ENCODE measurements at regions of chr17 and their contacts with region 1.

Region 1: GRCh38 chr17:71472809-71473789 is 647.7 kb upstream of the SOX9 start:
- ATAC-seq: peak in 7 of 8 experiments; percentile 42 to 73 (median 67)
- H3K4me3 ChIP-seq: no peak overlapping the region
- H3K27ac ChIP-seq: no peak overlapping the region
- H3K4me1 ChIP-seq: no peaks in the 10 kb centered on the region

Region 2: GRCh38 chr17:70636517-70637133 is 836.5 kb before region 1 on chr17:
- in situ Hi-C with region 1: loop called in 2 of 9 experiments (anchors 25 kb)
- ATAC-seq: peak in 1 of 8 experiments; percentile 38
- H3K4me3 ChIP-seq: no peak overlapping the region
- H3K27ac ChIP-seq: no peak overlapping the region
- H3K4me1 ChIP-seq: peaks cover 0 to 3% of the 10 kb centered on the region in 2 donors

Region 3: GRCh38 chr17:71142333-71142732 is 330.8 kb before region 1 on chr17:
- in situ Hi-C with region 1: loop called in 1 of 9 experiments (anchors 25 kb)
- ATAC-seq: no peak
- H3K4me3 ChIP-seq: no peak overlapping the region
- H3K27ac ChIP-seq: no peak overlapping the region
- H3K4me1 ChIP-seq: peaks cover 11 to 13% of the 10 kb centered on the region in 2 donors

Region 4: DNA sequence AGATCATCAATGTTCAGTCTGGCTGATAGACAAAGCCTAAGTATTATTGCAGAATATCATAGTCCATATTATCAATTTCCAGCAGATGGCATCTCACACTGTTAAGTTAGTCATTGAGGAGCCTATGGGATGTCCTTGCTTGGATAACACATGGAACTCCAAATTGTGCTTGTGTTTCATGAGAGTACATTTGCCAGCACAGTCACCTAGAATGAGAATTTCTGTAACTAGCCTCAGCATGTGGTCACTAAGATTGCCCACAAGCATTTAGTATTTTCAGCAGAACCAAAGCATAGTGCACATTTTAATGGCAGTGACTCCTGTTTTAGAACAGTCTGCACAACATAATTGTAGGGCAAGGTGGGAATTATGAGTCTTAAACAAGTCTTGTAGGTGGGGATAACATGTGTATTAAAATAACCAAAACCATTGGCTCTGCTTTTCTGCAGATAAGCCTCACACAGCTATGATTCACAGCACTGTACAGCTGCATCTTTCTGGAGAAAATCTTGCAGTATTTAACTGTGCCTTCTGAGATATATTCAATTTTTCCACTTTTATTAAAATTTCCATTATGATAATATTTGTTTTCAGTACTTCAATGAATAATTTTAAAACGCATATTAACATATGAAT is 235.1 kb before region 1 on chr17:
- in situ Hi-C with region 1: loop called in 1 of 9 experiments (anchors 25 kb)
- ATAC-seq: peak in 6 of 8 experiments; percentile 46 to 85 (median 58)
- H3K4me3 ChIP-seq: no peak overlapping the region
- H3K27ac ChIP-seq: no peak overlapping the region
- H3K4me1 ChIP-seq: no peaks in the 10 kb centered on the region

Region 5: DNA sequence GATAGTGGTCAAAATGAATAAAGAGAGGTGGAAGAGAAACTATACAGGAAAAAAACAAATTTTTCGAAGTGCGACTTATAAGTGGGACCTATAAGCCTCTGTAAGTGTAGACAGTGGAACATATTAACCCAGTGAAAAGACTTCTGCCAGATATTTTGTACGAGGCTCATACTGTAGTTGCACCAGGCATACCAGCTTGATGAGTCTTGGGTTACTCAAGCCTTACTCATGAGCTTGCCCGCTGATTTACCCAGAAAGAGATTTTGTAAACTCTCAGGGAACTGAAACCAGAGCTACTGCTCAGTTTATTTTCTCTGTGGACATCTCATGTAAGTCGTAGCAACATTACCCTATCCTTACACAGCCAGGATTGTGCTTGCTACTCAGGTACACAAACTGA is 60.3 kb before region 1 on chr17:
- in situ Hi-C with region 1: no loop called
- ATAC-seq: peak in 1 of 8 experiments; percentile 34
- H3K4me3 ChIP-seq: no peak overlapping the region
- H3K27ac ChIP-seq: no peak overlapping the region
- H3K4me1 ChIP-seq: no peaks in the 10 kb centered on the region

Region 6: GRCh38 chr17:72077326-72077960 is 604.3 kb after region 1 on chr17:
- in situ Hi-C with region 1: loop called in 1 of 9 experiments (anchors 25 kb)
- ATAC-seq: no peak
- H3K4me3 ChIP-seq: no peak overlapping the region
- H3K27ac ChIP-seq: no peak overlapping the region
- H3K4me1 ChIP-seq: peaks cover 0 to 10% of the 10 kb centered on the region in 2 donors

Measured in motor neuron (in vitro differentiated cells).